BJ (cell line): ENCODE measurements at regions of chr11 and their contacts with region 1.

Region 1: GRCh38 chr11:116879800-116880625 is 42.6 kb upstream of the APOA1 start:
- DNase-seq: no peak
- H3K4me3 ChIP-seq: no peak overlapping the region
- H3K27me3 ChIP-seq: no peaks in the 10 kb centered on the region
- CTCF ChIP-seq: peak; percentile 81

Region 2: DNA sequence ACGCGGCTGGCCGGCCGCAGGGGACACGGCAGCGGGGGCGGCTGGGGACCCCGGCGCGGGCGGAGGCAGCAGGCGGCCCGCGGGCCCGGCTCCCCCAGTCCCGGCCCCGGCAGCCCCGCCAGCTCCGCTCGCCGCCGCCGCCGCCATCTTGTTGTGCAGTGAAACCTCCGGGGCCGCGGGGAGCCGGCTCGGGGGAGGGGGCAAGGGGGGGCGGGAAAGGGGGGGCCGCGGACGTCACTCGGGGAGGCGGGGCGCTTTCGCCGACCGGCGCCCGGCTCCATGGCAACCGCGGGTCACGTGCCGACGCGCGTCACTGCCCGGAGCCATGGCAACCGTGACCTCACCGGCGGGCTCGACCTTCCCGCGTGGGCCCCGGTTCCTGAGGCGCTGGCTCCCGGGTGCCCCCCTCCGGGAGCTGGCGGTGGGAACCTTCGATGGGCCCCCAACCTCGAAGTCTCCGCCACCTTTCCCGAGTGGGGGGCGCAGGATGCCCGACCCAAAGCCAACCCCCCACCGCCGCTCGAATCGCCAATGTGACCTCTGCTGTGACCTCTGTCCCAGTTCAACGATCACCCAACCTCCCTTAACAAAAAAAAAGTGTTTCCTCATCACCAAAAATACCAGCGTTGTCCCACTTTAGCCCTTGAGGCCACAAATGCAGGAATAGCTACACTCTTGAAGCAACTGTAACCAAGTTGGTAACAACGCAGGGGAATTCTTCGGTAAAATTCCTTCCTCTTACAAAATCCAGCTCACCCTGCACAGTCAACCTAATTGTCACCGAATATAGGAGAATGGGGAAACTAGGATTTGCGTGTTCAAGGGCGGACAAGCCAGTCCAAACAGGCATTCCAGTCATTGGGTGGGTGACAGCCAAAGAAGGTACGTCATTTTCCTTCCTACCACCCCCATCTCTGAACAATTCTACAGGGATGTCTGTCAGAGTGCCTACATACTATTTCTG is 218.5 kb after region 1 on chr11 and contains the start of gene SIK3:
- CTCF ChIA-PET with region 1: interaction called, 14 read pairs
- POLR2A ChIA-PET with region 1: no interaction called
- DNase-seq: peak; percentile 45
- H3K4me3 ChIP-seq: peak within 1 kb of the TSS; percentile 82
- H3K27me3 ChIP-seq: no peaks in the 10 kb centered on the region
- CTCF ChIP-seq: peak; percentile 48
- polyA plus RNA-seq, gene SIK3: 5.3 and 7.3 TPM in 2 replicates